Adrenal gland (tissue), 19 donors: ENCODE measurements at regions of chr11 and their contacts with region 1.

Region 1: GRCh38 chr11:128039140-128040021 is 548.0 kb downstream of the ETS1 start:
- DNase-seq: peak in 2 of 7 donors; percentile 5 to 16
- H3K4me3 ChIP-seq: no peak overlapping the region
- H3K27ac ChIP-seq: peak overlapping the region in 1 of 5 donors; percentile 39
- H3K4me1 ChIP-seq: no peaks in the 10 kb centered on the region
- H3K27me3 ChIP-seq: no peaks in the 10 kb centered on the region
- CTCF ChIP-seq: no peak
- POLR2A ChIP-seq: no peak

Region 2: GRCh38 chr11:128157423-128158298 is 118.3 kb after region 1 on chr11:
- intact Hi-C with region 1: loop called (anchors 5 to 10 kb)
- DNase-seq: peak in 6 of 7 donors; percentile 38 to 65 (median 56)
- H3K4me3 ChIP-seq: peak overlapping the region in 1 of 4 donors; percentile 35
- H3K27ac ChIP-seq: no peak overlapping the region
- H3K4me1 ChIP-seq: no peaks in the 10 kb centered on the region
- H3K27me3 ChIP-seq: no peaks in the 10 kb centered on the region
- CTCF ChIP-seq: peak; percentile 76 to 97 (median 90)
- POLR2A ChIP-seq: no peak

Region 3: GRCh38 chr11:128210148-128210940 is 171.0 kb after region 1 on chr11:
- intact Hi-C with region 1: no loop called
- DNase-seq: peak in 5 of 7 donors; percentile 7 to 72 (median 58)
- H3K4me3 ChIP-seq: no peak overlapping the region
- H3K27ac ChIP-seq: peak overlapping the region in 1 of 5 donors; percentile 41
- H3K4me1 ChIP-seq: no peaks in the 10 kb centered on the region
- H3K27me3 ChIP-seq: no peaks in the 10 kb centered on the region
- CTCF ChIP-seq: no peak
- POLR2A ChIP-seq: no peak

Region 4: GRCh38 chr11:128831174-128832120 is 792.1 kb after region 1 on chr11:
- intact Hi-C with region 1: loop called in 1 of 2 experiments (anchors 10 kb)
- DNase-seq: peak; percentile 64 to 92 (median 80)
- H3K4me3 ChIP-seq: peak overlapping the region in 1 of 4 donors; percentile 28
- H3K27ac ChIP-seq: no peak overlapping the region
- H3K4me1 ChIP-seq: peaks cover 3 to 18% of the 10 kb centered on the region in 2 donors
- H3K27me3 ChIP-seq: no peaks in the 10 kb centered on the region
- CTCF ChIP-seq: peak; percentile 68 to 95 (median 80)
- POLR2A ChIP-seq: no peak